Ascending aorta (tissue), 2 donors: ENCODE measurements at regions of chr5 and their contacts with region 1.

Region 1: DNA sequence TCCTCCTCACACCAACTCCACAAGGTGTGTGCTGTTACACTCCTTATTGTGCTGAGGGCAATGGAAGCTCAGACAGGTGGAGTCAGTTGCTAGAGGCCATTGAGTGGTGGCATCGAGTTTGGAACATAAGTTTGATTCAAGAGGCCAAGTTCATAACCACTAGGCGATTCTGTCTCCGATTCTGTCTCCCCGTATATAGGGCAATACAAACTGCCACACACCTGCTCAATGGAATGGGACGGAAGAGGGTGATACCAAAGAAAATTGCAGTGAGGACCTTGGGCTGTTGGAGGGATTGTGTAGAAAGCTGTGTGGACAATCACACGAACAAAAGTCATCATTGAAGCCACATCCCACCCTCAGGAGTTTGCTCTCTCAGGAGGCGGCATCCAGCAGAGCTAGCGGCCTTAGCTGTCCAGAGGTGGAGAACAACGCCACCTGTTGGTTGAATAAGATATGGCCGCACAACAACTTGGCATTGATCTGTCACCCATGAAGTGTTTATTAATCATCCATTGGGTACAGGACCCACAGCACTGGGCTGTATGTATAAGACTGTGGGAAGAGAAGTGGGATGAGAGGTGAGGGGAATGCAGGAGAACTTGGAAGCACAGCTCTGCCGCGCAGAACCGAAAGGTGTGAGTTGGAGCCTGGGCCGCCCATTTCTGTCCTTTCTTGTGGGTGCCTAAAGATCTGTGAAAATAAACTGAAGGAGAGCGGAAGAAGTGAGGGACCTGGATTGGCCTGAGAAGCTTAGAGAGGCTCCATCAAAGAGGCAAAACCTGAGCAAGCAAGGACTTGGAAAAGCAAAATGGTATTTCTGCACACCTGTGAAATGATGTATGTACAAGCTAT is 16.1 kb upstream of the NEUROG1 start:
- DNase-seq: peak in 1 of 2 donors; percentile 82
- H3K4me3 ChIP-seq: no peak overlapping the region
- H3K27ac ChIP-seq: no peak overlapping the region
- H3K4me1 ChIP-seq: no peaks in the 10 kb centered on the region
- H3K27me3 ChIP-seq: peaks cover 4% of the 10 kb centered on the region
- CTCF ChIP-seq: peak; percentile 73 to 90 (median 75)

Region 2: GRCh38 chr5:135466178-135467050 is 85.4 kb before region 1 on chr5:
- intact Hi-C with region 1: loop called (anchors 1 kb)
- DNase-seq: peak in 1 of 2 donors; percentile 84
- H3K4me3 ChIP-seq: peak overlapping the region; percentile 22 to 47
- H3K27ac ChIP-seq: no peak overlapping the region
- H3K4me1 ChIP-seq: no peaks in the 10 kb centered on the region
- H3K27me3 ChIP-seq: no peaks in the 10 kb centered on the region
- CTCF ChIP-seq: peak; percentile 79 to 93 (median 89)

Region 3: GRCh38 chr5:135628771-135629563 is 77.1 kb after region 1 on chr5:
- intact Hi-C with region 1: no loop called
- DNase-seq: no peak
- H3K4me3 ChIP-seq: no peak overlapping the region
- H3K27ac ChIP-seq: no peak overlapping the region
- H3K4me1 ChIP-seq: no peaks in the 10 kb centered on the region
- H3K27me3 ChIP-seq: no peaks in the 10 kb centered on the region
- CTCF ChIP-seq: no peak

Region 4: GRCh38 chr5:136474466-136474865 is 922.6 kb after region 1 on chr5:
- intact Hi-C with region 1: no loop called
- DNase-seq: no peak
- H3K4me3 ChIP-seq: no peak overlapping the region
- H3K27ac ChIP-seq: no peak overlapping the region
- H3K4me1 ChIP-seq: no peaks in the 10 kb centered on the region
- H3K27me3 ChIP-seq: no peaks in the 10 kb centered on the region
- CTCF ChIP-seq: no peak